Activated naive CD4-positive, alpha-beta T cell treated with anti-CD3 and anti-CD28 coated beads for 36 hours (primary cell): ENCODE measurements at regions of chr4 and their contacts with region 1.

Region 1: GRCh38 chr4:33494150-33494549 is 2750.2 kb downstream of the ARAP2 start:
- DNase-seq: no peak
- H3K4me3 Mint-ChIP-seq: no peak overlapping the region
- H3K27ac Mint-ChIP-seq: no peak overlapping the region
- H3K4me1 Mint-ChIP-seq: no peaks in the 10 kb centered on the region
- H3K27me3 Mint-ChIP-seq: no peaks in the 10 kb centered on the region

Region 2: DNA sequence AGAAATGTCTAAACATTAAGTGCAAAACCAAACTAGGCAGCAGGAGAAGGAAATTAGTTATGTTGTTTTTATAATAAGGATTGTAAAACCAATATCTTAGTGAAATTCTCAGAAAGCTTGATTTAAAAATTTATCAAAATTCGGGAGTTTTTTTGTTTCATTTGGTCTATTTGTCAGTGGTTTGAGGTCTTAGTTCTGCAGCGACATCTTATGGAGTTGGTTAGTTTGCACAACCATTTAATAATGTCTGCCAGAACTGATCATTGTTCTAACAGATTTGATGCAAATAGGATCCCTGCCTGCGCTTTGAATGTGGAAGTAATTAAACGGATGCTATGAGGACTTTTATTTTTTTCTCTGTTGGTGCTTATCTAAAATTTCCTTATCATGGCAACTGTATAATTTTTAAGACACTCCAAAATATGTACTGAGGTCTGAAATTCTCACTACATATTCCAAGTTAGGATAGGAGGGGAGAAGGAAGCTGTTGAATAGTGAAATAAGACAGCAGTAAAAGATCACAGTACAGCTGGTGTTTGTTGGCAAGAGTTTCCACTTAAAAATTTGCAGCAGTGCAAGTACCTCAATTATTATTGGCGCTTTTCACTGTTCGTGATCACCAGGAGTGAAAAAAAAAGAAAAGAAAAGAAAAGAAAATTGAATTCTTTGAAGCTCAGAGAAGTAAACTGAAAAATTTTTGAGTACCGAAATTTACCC is 228.8 kb after region 1 on chr4:
- CTCF ChIA-PET with region 1: no interaction called
- intact Hi-C with region 1: no loop called
- DNase-seq: no peak
- H3K4me3 Mint-ChIP-seq: no peak overlapping the region
- H3K27ac Mint-ChIP-seq: no peak overlapping the region
- H3K4me1 Mint-ChIP-seq: no peaks in the 10 kb centered on the region
- H3K27me3 Mint-ChIP-seq: no peaks in the 10 kb centered on the region

Region 3: GRCh38 chr4:35228313-35228712 is 1734.2 kb after region 1 on chr4:
- CTCF ChIA-PET with region 1: no interaction called
- intact Hi-C with region 1: loop called (anchors 5 kb)
- DNase-seq: no peak
- H3K4me3 Mint-ChIP-seq: no peak overlapping the region
- H3K27ac Mint-ChIP-seq: no peak overlapping the region
- H3K4me1 Mint-ChIP-seq: no peaks in the 10 kb centered on the region
- H3K27me3 Mint-ChIP-seq: no peaks in the 10 kb centered on the region